IMR-90 (cell line): ENCODE measurements at regions of chr15 and their contacts with region 1.

Region 1: GRCh38 chr15:62306851-62307504 is 141.9 kb upstream of the C2CD4B start:
- DNase-seq: peak; percentile 67
- ATAC-seq: peak; percentile 93
- H3K4me3 ChIP-seq: no peak overlapping the region
- H3K27ac ChIP-seq: no peak overlapping the region
- H3K4me1 ChIP-seq: no peaks in the 10 kb centered on the region
- H3K27me3 ChIP-seq: peaks cover 8% of the 10 kb centered on the region
- CTCF ChIP-seq: peak; percentile 62
- POLR2A ChIP-seq: no peak
- RAD21 ChIP-seq: peak; percentile 56

Region 2: DNA sequence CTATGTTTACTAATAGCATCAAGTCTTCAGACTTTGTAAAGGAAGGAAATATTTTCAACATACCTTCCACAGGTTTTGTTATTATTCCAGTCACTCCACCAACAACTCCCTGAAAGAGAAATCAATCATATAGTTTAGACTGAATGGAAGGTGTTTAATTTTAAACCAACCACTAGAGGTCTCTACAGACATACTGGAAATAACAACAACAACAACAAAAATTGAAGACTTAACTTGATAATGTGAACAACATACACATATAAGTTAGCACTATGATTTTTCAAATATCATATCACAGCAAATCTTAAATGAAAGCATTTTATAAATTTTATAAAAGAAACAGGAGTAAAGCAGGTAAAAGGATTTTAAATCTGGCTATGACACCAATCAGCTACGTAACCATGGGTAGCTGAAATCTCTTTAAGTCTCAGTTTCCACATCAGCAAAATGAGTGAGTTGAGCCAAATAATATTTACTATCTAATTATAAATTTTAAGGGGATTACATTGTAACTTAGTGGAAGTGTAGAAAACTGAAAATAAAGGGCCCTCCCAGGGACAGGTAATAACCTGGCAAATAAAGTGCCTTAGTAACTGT is 435.0 kb before region 1 on chr15:
- CTCF ChIA-PET with region 1: no interaction called
- POLR2A ChIA-PET with region 1: no interaction called
- dilution Hi-C with region 1: no loop called
- in situ Hi-C with region 1: no loop called
- intact Hi-C with region 1: loop called (anchors 2 kb)
- DNase-seq: peak; percentile 20
- ATAC-seq: peak; percentile 66; the same call in 1 of the 2 replicates
- H3K4me3 ChIP-seq: no peak overlapping the region
- H3K27ac ChIP-seq: no peak overlapping the region
- H3K4me1 ChIP-seq: no peaks in the 10 kb centered on the region
- H3K27me3 ChIP-seq: no peaks in the 10 kb centered on the region
- CTCF ChIP-seq: peak; percentile 52
- POLR2A ChIP-seq: no peak
- RAD21 ChIP-seq: peak; percentile 50